Endothelial cell of umbilical vein (primary cell): ENCODE measurements at regions of chr2 and their contacts with region 1.

Region 1: DNA sequence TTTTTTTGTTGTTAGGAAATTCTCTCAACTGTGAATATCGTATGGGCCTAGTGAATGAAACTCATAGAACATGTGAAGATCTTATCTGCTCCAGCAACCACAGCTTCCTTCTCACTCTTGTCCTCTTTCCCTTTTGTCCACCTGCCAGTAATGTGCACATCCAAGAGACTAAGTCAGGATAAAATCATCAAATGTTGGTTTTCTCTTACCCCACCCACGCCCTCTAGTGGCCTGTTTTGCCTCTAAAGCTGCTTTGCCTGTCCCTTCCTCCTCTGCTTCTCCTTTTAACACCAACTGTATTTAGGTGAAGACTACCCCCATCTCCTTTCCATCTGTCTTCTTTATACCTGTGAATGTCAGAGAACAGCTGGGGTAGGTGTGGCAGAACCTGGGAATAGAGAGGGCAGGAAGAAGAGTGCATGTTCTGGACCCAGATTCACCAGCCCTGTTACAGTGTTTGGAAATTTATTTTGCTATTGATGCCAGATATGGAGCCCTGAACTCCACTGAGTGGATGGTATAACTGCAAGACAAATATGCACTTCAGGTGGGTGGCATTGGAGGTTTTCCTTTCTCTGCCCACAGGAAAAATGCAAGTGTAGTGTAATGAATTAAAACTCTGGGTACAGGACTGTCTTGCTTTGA is 8.4 kb upstream of the MGAT5 start:
- DNase-seq: peak; percentile 57
- H3K4me3 ChIP-seq: no peak overlapping the region
- H3K27ac ChIP-seq: no peak overlapping the region
- H3K4me1 ChIP-seq: peaks cover 14% of the 10 kb centered on the region
- H3K27me3 ChIP-seq: no peaks in the 10 kb centered on the region
- CTCF ChIP-seq: peak; percentile 76
- POLR2A ChIP-seq: no peak

Region 2: DNA sequence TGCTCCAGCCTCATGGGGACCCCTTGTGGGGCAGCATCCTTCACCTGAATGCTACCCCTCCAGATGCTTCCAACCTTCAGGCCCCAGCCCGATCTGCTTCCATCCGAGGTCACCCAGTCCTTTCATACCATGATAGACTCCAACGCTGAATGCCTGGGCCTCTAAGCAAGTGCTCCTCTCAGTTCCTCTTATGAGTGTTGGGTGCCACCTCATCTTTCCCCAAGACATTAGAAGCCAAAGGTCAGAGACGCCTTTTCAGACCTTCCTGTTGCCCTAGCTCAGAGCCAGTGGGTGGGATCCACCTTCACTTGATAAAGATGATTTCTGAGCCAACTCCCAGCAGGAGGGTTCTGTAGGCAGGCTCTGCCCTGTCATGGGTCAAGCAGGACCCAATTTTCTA is 166.1 kb before region 1 on chr2:
- CTCF ChIA-PET with region 1: no interaction called
- POLR2A ChIA-PET with region 1: no interaction called
- dilution Hi-C with region 1: no loop called
- intact Hi-C with region 1: no loop called
- DNase-seq: no peak
- H3K4me3 ChIP-seq: no peak overlapping the region
- H3K27ac ChIP-seq: no peak overlapping the region
- H3K4me1 ChIP-seq: no peaks in the 10 kb centered on the region
- H3K27me3 ChIP-seq: peaks cover 0 to 4% of the 10 kb centered on the region in 2 experiments
- CTCF ChIP-seq: no peak
- POLR2A ChIP-seq: no peak

Region 3: GRCh38 chr2:134167019-134167600 is 78.4 kb before region 1 on chr2:
- CTCF ChIA-PET with region 1: no interaction called
- POLR2A ChIA-PET with region 1: no interaction called
- dilution Hi-C with region 1: no loop called
- intact Hi-C with region 1: no loop called
- DNase-seq: no peak
- H3K4me3 ChIP-seq: no peak overlapping the region
- H3K27ac ChIP-seq: no peak overlapping the region
- H3K4me1 ChIP-seq: peaks cover under 1% of the 10 kb centered on the region
- H3K27me3 ChIP-seq: no peaks in the 10 kb centered on the region
- CTCF ChIP-seq: no peak
- POLR2A ChIP-seq: no peak

Region 4: DNA sequence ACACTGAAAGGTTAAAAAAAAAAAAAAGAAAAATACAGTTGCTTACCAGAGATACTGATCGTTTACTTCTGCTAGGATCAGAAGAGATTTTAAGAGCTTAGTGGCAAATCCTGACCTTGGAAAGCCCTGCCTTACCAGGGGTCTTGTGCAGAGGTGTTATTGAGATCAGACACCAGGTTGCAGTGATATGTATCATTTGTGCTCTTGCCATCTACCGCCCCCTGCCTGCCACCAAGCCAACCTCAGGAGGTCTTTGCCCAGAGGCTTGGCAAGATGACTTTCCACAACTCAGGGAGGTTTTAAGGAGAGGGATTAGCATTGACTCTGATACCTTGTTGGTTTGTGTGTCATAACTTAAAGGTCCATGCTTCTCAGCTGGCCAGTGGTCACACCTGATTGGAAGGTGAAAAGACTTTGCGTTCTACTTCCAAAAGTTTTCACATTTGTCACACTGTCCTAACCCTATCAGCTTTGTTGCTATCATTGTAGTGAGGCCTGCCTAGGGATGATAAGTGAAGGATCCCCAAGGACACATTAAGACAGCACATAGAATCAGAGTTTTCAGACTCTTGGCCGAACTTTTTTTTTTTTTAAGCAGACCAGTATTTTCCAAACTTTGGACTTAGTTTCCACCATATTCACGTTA is 37.8 kb before region 1 on chr2:
- CTCF ChIA-PET with region 1: interaction called, 15 read pairs
- POLR2A ChIA-PET with region 1: no interaction called
- dilution Hi-C with region 1: no loop called
- intact Hi-C with region 1: no loop called
- DNase-seq: peak; percentile 69
- H3K4me3 ChIP-seq: no peak overlapping the region
- H3K27ac ChIP-seq: no peak overlapping the region
- H3K4me1 ChIP-seq: peaks cover 5% of the 10 kb centered on the region
- H3K27me3 ChIP-seq: no peaks in the 10 kb centered on the region
- CTCF ChIP-seq: peak; percentile 75 to 85
- POLR2A ChIP-seq: no peak

Region 5: DNA sequence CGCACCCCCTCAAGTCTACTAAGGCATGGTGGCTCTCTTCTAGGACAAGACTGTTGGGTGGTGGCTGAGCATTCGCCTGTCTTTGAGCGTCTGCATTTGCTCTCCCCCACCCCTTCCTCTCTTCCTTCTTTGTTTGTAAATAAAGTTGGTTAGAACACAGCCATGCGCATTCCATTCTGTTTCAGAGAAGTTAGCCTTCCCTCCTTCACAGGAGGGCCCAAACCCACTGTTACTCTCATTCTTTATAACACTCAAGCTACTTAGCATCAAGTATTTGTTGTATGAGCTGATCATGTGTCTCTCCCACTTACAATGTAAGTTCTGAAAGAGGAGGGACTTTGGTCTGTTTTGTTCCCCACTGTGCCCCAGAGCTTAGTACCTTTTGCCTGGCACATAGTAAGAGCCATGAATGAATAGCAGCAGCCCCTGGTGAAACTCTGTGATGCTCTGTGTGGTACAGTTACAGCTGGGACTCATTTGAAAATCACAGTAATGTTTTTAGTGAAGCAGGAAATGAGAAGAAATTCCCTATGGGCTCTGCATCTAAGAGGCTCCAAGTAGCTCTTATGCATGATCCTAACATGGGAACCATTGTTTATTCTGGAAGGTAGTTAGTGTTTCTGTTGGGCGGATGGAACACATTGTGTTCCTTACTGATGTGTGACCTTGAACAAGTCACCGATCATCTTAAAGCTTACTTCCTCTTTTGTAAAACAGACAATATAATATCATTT is 16.1 kb after region 1 on chr2:
- CTCF ChIA-PET with region 1: interaction called, 26 read pairs
- POLR2A ChIA-PET with region 1: no interaction called
- dilution Hi-C with region 1: no loop called
- intact Hi-C with region 1: no loop called
- DNase-seq: peak; percentile 72
- H3K4me3 ChIP-seq: no peak overlapping the region
- H3K27ac ChIP-seq: peak overlapping the region; percentile 36
- H3K4me1 ChIP-seq: peaks cover 25% of the 10 kb centered on the region
- H3K27me3 ChIP-seq: no peaks in the 10 kb centered on the region
- CTCF ChIP-seq: no peak
- POLR2A ChIP-seq: no peak

Region 6: GRCh38 chr2:134307334-134307733 is 61.9 kb after region 1 on chr2:
- CTCF ChIA-PET with region 1: interaction called, 10 read pairs
- POLR2A ChIA-PET with region 1: no interaction called
- dilution Hi-C with region 1: no loop called
- intact Hi-C with region 1: loop called (anchors 2 kb)
- DNase-seq: peak; percentile 91
- H3K4me3 ChIP-seq: peak overlapping the region in 1 of 3 experiments; percentile 26
- H3K27ac ChIP-seq: peak overlapping the region; percentile 91
- H3K4me1 ChIP-seq: peaks cover 72% of the 10 kb centered on the region
- H3K27me3 ChIP-seq: no peaks in the 10 kb centered on the region
- CTCF ChIP-seq: no peak
- POLR2A ChIP-seq: peak; percentile 56

Region 7: GRCh38 chr2:134823419-134823818 is 578.0 kb after region 1 on chr2:
- CTCF ChIA-PET with region 1: no interaction called
- POLR2A ChIA-PET with region 1: no interaction called
- dilution Hi-C with region 1: no loop called
- intact Hi-C with region 1: no loop called
- DNase-seq: no peak
- H3K4me3 ChIP-seq: no peak overlapping the region
- H3K27ac ChIP-seq: no peak overlapping the region
- H3K4me1 ChIP-seq: no peaks in the 10 kb centered on the region
- H3K27me3 ChIP-seq: no peaks in the 10 kb centered on the region
- CTCF ChIP-seq: no peak
- POLR2A ChIP-seq: no peak